ENCODE measurements at regions of chr5 and their contacts with region 1.

Region 1: GRCh38 chr5:73812962-73813588 is 187.1 kb downstream of the ARHGEF28 start:
- DNase-seq: peak; percentile 72
- H3K4me3 Mint-ChIP-seq: peak overlapping the region; percentile 85
- H3K27ac Mint-ChIP-seq: peak overlapping the region; percentile 91
- H3K4me1 Mint-ChIP-seq: peaks cover 49% of the 10 kb centered on the region
- H3K27me3 Mint-ChIP-seq: no peaks in the 10 kb centered on the region
- CTCF ChIP-seq: no peak

Region 2: GRCh38 chr5:73498057-73499008 is 314.7 kb before region 1 on chr5 and contains the start of gene BTF3:
- CTCF ChIA-PET with region 1: no interaction called
- POLR2A ChIA-PET with region 1: interaction called, 22 read pairs
- intact Hi-C with region 1: no loop called
- DNase-seq: peak; percentile 97
- H3K4me3 Mint-ChIP-seq: peak within 1 kb of the TSS; percentile 94
- H3K27ac Mint-ChIP-seq: peak within 1 kb of the TSS; percentile 98
- H3K4me1 Mint-ChIP-seq: peaks cover 15% of the 10 kb centered on the region
- H3K27me3 Mint-ChIP-seq: no peaks in the 10 kb centered on the region
- CTCF ChIP-seq: no peak
- total RNA-seq, gene BTF3: 937 and 946 TPM in 2 replicates

Region 3: DNA sequence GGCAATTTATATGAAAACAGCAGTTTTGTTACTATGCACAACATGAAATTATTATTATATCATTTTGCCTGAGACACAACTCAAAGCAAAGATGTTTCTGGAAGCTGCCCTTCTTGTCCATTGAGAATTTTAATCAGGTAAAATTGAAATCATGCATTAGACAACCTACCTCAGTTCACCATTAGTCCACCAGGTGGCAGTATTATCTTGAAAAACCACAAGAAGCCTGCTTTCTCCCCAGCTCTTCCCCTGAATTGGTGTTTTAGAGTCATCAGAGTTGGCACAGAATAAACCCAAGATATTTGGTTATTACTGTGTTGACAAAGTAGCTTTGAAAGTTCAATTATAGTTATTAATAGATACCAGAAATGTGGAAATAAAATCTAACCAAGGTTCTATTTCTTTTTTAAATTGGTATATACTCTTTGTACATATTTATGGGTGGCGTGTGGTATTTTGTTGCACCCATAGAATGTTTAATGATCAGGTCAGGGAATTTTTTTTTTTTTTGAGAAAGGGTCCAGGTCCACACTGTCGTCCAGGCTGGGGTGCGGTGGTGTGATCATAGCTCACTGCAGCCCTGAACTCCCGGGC is 221.9 kb before region 1 on chr5:
- CTCF ChIA-PET with region 1: interaction called, 6 read pairs
- POLR2A ChIA-PET with region 1: interaction called, 14 read pairs
- intact Hi-C with region 1: no loop called
- DNase-seq: peak; percentile 84
- H3K4me3 Mint-ChIP-seq: no peak overlapping the region
- H3K27ac Mint-ChIP-seq: no peak overlapping the region
- H3K4me1 Mint-ChIP-seq: peaks cover 14% of the 10 kb centered on the region
- H3K27me3 Mint-ChIP-seq: no peaks in the 10 kb centered on the region
- CTCF ChIP-seq: peak; percentile 64

Region 4: GRCh38 chr5:73747696-73748380 is 65.2 kb before region 1 on chr5:
- CTCF ChIA-PET with region 1: no interaction called
- POLR2A ChIA-PET with region 1: no interaction called
- intact Hi-C with region 1: no loop called
- DNase-seq: no peak
- H3K4me3 Mint-ChIP-seq: no peak overlapping the region
- H3K27ac Mint-ChIP-seq: no peak overlapping the region
- H3K4me1 Mint-ChIP-seq: peaks cover 41% of the 10 kb centered on the region
- H3K27me3 Mint-ChIP-seq: no peaks in the 10 kb centered on the region
- CTCF ChIP-seq: no peak

Region 5: GRCh38 chr5:73792687-73793320 is 20.3 kb before region 1 on chr5:
- CTCF ChIA-PET with region 1: interaction called, 10 read pairs
- POLR2A ChIA-PET with region 1: interaction called, 23 read pairs
- intact Hi-C with region 1: no loop called
- DNase-seq: peak; percentile 79
- H3K4me3 Mint-ChIP-seq: no peak overlapping the region
- H3K27ac Mint-ChIP-seq: no peak overlapping the region
- H3K4me1 Mint-ChIP-seq: peaks cover 13% of the 10 kb centered on the region
- H3K27me3 Mint-ChIP-seq: no peaks in the 10 kb centered on the region
- CTCF ChIP-seq: peak; percentile 96

Region 6: DNA sequence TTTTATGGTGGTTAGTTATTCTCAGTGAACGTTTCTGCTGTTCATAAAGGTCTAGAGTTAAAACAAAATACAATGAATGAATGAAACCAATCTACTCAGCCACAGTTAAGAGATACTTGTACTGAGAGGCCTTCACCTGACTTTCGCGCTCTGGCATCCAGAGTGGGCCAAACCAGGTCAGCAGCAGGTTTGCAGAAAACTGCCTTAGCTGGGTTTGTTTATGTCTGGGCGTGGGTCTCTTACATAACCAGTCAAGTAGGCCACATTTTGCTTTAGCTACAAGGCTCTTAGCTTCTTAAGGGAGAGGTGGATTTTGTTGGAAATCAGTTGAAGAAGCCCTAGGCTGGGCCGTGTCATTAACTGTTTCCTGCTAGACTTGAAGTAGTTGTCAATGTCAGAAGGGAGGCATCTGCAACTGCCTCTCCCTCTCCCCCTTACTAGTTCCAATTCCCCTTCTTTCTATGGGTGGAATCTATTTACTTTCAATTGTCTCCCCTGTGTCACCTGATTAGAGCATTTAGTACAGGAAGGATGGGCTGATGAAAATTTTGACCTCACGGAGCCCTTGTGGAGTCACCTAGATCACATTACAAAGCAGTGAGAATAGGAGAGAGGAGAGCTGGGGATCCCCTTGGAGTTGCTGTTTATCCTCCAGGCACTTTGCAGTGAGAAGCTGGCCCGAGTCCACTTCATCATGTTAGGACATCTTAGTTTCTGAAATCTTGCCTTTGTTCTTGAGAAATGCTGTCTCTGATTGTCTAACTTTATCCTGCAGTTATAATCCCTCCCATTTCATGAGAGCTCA is 13.4 kb after region 1 on chr5:
- CTCF ChIA-PET with region 1: interaction called, 7 read pairs
- POLR2A ChIA-PET with region 1: interaction called, 107 read pairs
- intact Hi-C with region 1: no loop called
- DNase-seq: peak; percentile 98
- H3K4me3 Mint-ChIP-seq: no peak overlapping the region
- H3K27ac Mint-ChIP-seq: no peak overlapping the region
- H3K4me1 Mint-ChIP-seq: peaks cover 7% of the 10 kb centered on the region
- H3K27me3 Mint-ChIP-seq: no peaks in the 10 kb centered on the region
- CTCF ChIP-seq: no peak

Measured in MCF 10A (cell line).